GM10248 (cell line): ENCODE measurements at regions of chr6 and their contacts with region 1.

Region 1: GRCh38 chr6:100062621-100063020 is 68.6 kb upstream of the MCHR2 start:
- DNase-seq: no peak
- CTCF ChIP-seq: no peak

Region 2: GRCh38 chr6:100078509-100078908 is 15.9 kb after region 1 on chr6:
- CTCF ChIA-PET with region 1: interaction called, 10 read pairs
- POLR2A ChIA-PET with region 1: no interaction called
- DNase-seq: no peak
- CTCF ChIP-seq: no peak